Activated B cell treated with CpG ODN at 0.5 μM for 24 hours (primary cell): ENCODE measurements at regions of chr5 and their contacts with region 1.

Region 1: DNA sequence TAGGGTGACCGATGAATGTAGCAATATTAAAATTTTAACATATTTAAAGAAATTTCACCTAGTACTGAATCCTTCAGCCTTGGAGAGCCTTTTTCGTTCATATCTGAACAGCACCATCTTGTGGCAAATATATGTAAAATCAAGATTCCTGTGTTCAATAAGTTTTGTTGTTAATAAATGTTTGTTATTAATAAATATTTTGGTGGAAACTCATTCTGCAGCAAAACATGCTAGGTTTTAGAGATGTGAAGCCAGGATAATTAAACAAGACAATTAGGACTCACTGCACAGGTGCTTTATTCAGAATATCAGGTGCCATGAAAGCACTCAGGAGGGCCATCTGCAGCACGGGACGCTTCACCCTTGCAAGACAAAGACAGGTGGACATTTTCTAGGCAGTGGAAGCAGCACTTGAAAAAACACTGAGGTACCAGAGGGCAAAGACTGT is 15.7 kb downstream of the TICAM2 start:
- DNase-seq: no peak
- ATAC-seq: peak; percentile 60
- H3K4me3 Mint-ChIP-seq: no peak overlapping the region
- H3K27ac Mint-ChIP-seq: no peak overlapping the region
- H3K4me1 Mint-ChIP-seq: peaks cover 6% of the 10 kb centered on the region
- H3K27me3 Mint-ChIP-seq: no peaks in the 10 kb centered on the region
- CTCF ChIP-seq: no peak

Region 2: GRCh38 chr5:113612060-113612496 is 1974.5 kb before region 1 on chr5:
- CTCF ChIA-PET with region 1: no interaction called
- POLR2A ChIA-PET with region 1: no interaction called
- intact Hi-C with region 1: loop called (anchors 5 kb)
- DNase-seq: no peak
- ATAC-seq: peak; percentile 52
- H3K4me3 Mint-ChIP-seq: no peak overlapping the region
- H3K27ac Mint-ChIP-seq: no peak overlapping the region
- H3K4me1 Mint-ChIP-seq: no peaks in the 10 kb centered on the region
- H3K27me3 Mint-ChIP-seq: peaks cover 24% of the 10 kb centered on the region
- CTCF ChIP-seq: no peak

Region 3: DNA sequence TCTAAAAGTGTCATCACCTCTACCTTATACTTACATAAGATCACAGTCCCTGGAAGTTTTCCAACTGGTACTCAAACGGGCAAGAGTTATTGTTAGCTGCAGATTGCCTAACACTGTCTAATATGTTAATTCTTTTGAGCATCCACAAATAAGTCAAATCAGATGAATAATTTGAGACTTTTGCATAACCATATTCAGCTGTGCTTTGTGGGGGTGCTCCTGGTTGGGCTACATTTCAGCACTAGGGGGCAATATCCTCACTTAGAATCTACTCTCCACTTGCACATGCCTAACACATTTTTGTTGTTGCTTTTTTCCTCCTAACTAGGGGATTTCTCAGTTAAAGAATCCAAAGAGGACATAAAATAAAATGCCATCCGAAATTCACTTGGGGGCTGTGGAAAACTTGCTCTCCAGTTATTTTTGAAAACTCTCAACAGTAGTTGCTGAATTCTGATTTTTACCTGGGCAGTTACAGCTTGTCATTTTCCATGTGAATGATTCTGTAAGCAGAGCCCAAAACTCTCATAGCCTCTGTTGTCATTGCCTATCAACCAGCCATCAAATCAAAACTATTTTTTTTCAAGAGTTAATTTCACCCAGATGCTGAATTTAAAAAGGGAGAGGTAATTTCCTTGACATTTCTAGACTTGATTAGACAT is 488.5 kb before region 1 on chr5:
- CTCF ChIA-PET with region 1: interaction called, 4 read pairs
- POLR2A ChIA-PET with region 1: interaction called, 9 read pairs
- intact Hi-C with region 1: loop called (anchors 1 kb)
- DNase-seq: no peak
- ATAC-seq: peak; percentile 75
- H3K4me3 Mint-ChIP-seq: no peak overlapping the region
- H3K27ac Mint-ChIP-seq: no peak overlapping the region
- H3K4me1 Mint-ChIP-seq: no peaks in the 10 kb centered on the region
- H3K27me3 Mint-ChIP-seq: peaks cover 3% of the 10 kb centered on the region
- CTCF ChIP-seq: no peak

Region 4: DNA sequence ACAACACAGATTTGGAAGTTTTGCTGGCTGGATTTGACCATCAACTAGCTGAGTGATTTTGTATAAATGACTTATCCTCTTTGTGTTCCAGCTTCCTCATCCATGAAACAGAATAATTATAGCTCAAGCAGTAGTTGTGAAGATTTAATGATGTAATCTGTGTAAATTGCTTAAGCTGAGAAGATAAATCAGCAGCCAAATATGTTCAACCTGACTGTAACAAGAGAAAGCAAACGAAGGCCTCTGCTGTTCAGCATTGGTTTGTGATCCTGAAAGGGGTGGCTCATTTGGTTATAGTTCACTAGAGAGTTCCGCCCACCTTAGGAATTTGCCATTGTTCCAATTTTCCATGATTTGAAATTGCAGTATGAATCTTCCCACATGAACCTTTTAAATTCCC is 214.5 kb before region 1 on chr5:
- CTCF ChIA-PET with region 1: no interaction called
- POLR2A ChIA-PET with region 1: no interaction called
- intact Hi-C with region 1: loop called (anchors 5 kb)
- DNase-seq: no peak
- ATAC-seq: no peak
- H3K4me3 Mint-ChIP-seq: no peak overlapping the region
- H3K27ac Mint-ChIP-seq: no peak overlapping the region
- H3K4me1 Mint-ChIP-seq: no peaks in the 10 kb centered on the region
- H3K27me3 Mint-ChIP-seq: no peaks in the 10 kb centered on the region
- CTCF ChIP-seq: no peak

Region 5: GRCh38 chr5:115389799-115390382 is 196.7 kb before region 1 on chr5:
- CTCF ChIA-PET with region 1: no interaction called
- POLR2A ChIA-PET with region 1: no interaction called
- intact Hi-C with region 1: loop called (anchors 5 kb)
- DNase-seq: no peak
- ATAC-seq: no peak
- H3K4me3 Mint-ChIP-seq: no peak overlapping the region
- H3K27ac Mint-ChIP-seq: no peak overlapping the region
- H3K4me1 Mint-ChIP-seq: no peaks in the 10 kb centered on the region
- H3K27me3 Mint-ChIP-seq: no peaks in the 10 kb centered on the region
- CTCF ChIP-seq: no peak

Region 6: DNA sequence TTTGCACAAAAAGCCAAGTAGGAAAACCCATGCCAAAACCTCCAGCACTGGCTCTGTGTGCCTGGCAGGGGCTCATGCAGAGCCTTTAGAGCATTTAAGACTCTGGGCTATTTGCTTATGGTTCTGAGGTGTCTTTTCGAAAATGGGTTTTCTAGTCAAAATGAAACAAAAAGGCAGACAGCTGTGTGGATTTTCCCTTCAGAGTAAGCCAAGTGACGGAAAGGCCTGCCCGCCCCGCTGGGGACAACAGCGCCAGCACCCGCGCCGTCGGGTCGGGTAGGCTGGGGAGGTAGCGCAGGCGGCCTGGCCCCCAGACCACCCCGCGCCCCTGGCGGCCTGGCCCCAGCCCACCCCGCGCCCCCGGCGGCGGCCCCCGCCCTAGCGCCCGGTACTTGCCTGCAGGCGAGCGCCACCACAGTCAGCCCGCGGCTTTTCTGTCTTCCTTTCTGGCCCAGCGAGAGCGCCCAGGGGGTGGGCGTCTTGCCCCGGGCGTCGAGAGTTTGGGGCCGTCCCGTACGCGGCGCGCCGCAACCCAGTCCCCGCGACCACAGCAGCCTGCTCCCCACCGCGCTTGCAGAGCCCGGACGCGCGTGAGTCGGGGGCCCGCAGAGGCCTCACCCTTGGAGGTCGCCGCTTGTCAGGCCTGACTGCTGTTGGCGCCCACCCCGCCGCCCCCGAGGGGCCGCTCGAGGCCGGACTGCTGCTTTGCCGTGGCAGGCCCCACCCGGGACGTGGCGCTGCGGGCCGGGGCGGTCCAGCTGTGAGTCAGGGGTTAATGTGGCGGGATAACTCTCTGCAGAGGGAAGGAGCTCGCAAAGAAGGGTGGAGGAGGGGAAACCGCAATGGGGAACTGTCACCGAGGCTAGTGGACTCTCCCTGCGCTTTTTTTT is 15.3 kb after region 1 on chr5 and contains the start of gene TICAM2:
- CTCF ChIA-PET with region 1: interaction called, 4 read pairs
- POLR2A ChIA-PET with region 1: interaction called, 3 read pairs
- intact Hi-C with region 1: loop called (anchors 1 kb)
- DNase-seq: peak; percentile 68
- ATAC-seq: peak; percentile 80
- H3K4me3 Mint-ChIP-seq: peak within 1 kb of the TSS; percentile 88
- H3K27ac Mint-ChIP-seq: peak within 1 kb of the TSS; percentile 98
- H3K4me1 Mint-ChIP-seq: peaks cover 56% of the 10 kb centered on the region
- H3K27me3 Mint-ChIP-seq: no peaks in the 10 kb centered on the region
- CTCF ChIP-seq: no peak
- total RNA-seq, gene TICAM2: 12.4 and 13.3 TPM in 2 replicates

Region 7: DNA sequence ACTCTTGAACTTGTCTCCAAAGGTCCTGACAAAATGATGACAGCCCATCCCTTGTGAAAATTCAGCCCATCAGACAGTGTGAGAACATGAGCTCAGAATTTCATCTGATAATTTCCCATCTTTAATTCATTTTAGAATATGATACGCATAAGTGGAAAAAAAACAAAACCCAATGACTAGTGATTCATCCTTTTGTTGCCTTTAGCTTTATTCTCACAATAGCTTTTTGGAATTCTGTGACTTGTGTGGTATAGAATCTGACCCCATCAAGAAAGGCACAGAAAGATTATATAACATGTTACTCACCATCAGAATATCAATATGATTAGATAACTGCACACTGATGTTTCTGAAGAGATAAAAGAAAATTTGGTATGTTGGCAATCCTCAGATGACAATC is 55.3 kb after region 1 on chr5:
- CTCF ChIA-PET with region 1: no interaction called
- POLR2A ChIA-PET with region 1: no interaction called
- intact Hi-C with region 1: no loop called
- DNase-seq: no peak
- ATAC-seq: no peak
- H3K4me3 Mint-ChIP-seq: no peak overlapping the region
- H3K27ac Mint-ChIP-seq: no peak overlapping the region
- H3K4me1 Mint-ChIP-seq: peaks cover 1% of the 10 kb centered on the region
- H3K27me3 Mint-ChIP-seq: peaks cover 27% of the 10 kb centered on the region
- CTCF ChIP-seq: no peak

Region 8: DNA sequence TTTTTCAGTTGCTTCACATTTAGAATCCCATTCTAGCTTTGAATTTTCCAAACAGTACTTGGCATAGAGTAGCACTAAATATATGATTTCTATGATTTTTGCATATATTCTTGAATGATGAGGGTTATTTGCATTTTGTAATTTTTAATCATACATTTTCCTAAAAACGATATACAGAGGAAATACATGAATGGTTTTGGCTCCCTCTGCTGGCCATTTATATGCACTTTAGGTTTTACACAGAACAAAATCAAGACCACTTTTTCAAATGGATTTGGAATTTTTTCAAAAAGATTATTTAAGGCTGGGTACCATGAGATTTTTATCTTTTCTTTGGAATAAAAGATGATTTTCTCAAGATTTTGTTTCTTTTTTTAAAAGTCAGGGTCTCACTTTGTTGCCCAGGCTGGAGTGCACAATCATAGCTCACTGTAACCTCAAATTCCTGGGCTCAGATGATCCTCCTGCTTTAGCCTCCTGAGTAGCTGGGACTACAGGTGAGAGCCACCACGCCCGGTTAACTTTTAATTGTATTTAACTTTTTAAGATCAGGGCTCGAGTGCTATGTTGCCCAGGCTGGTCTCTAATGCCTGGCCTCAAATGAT is 481.5 kb after region 1 on chr5:
- CTCF ChIA-PET with region 1: no interaction called
- POLR2A ChIA-PET with region 1: no interaction called
- intact Hi-C with region 1: loop called (anchors 1 kb)
- DNase-seq: no peak
- ATAC-seq: no peak
- H3K4me3 Mint-ChIP-seq: no peak overlapping the region
- H3K27ac Mint-ChIP-seq: no peak overlapping the region
- H3K4me1 Mint-ChIP-seq: no peaks in the 10 kb centered on the region
- H3K27me3 Mint-ChIP-seq: no peaks in the 10 kb centered on the region
- CTCF ChIP-seq: peak; percentile 84